ENCODE measurements at regions of chr13 and their contacts with region 1.

Region 1: DNA sequence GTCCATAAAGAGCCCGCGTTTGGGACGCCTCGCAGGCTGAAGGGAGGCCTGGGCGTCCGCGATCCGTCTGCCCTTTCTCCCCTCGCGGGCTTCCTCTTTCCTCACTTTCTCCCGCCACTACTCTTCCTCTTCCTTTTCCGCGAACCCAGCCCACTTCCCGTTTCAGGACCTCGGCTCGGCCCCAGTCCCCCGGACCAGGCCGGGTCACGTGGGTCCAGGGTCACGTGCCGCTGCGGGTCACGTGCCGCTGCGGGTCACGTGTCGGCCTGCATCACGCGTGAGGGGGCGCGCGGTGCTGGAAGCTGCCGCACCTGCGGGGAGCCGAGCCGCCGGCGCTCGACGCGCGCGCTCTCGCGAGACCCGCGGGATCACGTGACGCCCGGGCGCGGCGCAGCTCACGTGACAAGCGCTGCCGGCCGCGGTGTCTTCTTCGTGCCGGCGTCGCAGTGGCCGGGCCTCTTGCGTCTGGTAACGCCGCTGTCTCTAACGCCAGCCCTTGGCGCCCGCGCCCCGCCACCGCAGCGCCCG is at the start of gene LAMP1:
- DNase-seq: peak; percentile 97 to 100 (median 99)
- ATAC-seq: peak; percentile 83
- H3K4me3 ChIP-seq: peak within 1 kb of the TSS; percentile 72 to 93
- H3K4me3 Mint-ChIP-seq: peak within 1 kb of the TSS; percentile 96
- H3K27ac ChIP-seq: peak within 1 kb of the TSS; percentile 83 to 88
- H3K27ac Mint-ChIP-seq: peak within 1 kb of the TSS; percentile 100
- H3K4me1 ChIP-seq: peaks cover 31% of the 10 kb centered on the region
- H3K4me1 Mint-ChIP-seq: peaks cover 39% of the 10 kb centered on the region
- H3K27me3 ChIP-seq: peaks cover 2 to 4% of the 10 kb centered on the region in 2 experiments
- H3K27me3 Mint-ChIP-seq: peaks cover 12% of the 10 kb centered on the region
- CTCF ChIP-seq: no peak
- total RNA-seq, gene LAMP1: 84.8 to 87.5 TPM

Region 2: DNA sequence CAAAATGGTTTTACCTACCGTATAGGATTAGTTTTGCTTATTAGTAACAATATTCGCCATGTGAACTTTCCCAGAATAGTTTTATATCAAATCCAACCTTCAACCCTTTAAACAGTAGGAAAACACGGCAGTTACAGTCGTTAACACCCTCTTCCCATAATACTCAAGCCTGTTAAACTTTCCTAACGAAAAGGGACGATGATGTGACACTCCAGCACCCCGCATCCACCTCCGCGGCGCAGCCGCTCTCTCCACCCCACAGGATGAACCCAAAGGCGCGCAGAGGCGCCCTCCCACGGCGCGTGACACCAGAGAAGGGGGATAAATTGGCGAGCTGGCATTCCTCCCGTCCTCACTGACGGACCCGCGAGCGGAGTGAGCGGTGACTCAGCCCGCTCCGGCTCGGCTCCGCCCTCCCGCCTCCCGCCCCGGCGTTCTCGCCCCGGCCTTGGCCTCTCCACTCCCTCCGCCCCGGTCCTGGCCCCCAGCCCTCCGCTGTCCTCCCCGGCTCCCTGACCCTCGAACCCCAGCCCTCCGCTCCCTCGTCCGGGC is 709.6 kb before region 1 on chr13:
- CTCF ChIA-PET with region 1: no interaction called
- POLR2A ChIA-PET with region 1: no interaction called
- intact Hi-C with region 1: loop called in 1 of 2 experiments (anchors 10 kb)
- DNase-seq: peak; percentile 9 to 81 (median 68)
- ATAC-seq: peak; percentile 70
- H3K4me3 ChIP-seq: peak overlapping the region; percentile 76 to 83
- H3K4me3 Mint-ChIP-seq: peak overlapping the region; percentile 96
- H3K27ac ChIP-seq: peak overlapping the region; percentile 57 to 58
- H3K27ac Mint-ChIP-seq: peak overlapping the region; percentile 89
- H3K4me1 ChIP-seq: peaks cover 18% of the 10 kb centered on the region
- H3K4me1 Mint-ChIP-seq: peaks cover 44% of the 10 kb centered on the region
- H3K27me3 ChIP-seq: no peaks in the 10 kb centered on the region
- H3K27me3 Mint-ChIP-seq: no peaks in the 10 kb centered on the region
- CTCF ChIP-seq: no peak

Region 3: DNA sequence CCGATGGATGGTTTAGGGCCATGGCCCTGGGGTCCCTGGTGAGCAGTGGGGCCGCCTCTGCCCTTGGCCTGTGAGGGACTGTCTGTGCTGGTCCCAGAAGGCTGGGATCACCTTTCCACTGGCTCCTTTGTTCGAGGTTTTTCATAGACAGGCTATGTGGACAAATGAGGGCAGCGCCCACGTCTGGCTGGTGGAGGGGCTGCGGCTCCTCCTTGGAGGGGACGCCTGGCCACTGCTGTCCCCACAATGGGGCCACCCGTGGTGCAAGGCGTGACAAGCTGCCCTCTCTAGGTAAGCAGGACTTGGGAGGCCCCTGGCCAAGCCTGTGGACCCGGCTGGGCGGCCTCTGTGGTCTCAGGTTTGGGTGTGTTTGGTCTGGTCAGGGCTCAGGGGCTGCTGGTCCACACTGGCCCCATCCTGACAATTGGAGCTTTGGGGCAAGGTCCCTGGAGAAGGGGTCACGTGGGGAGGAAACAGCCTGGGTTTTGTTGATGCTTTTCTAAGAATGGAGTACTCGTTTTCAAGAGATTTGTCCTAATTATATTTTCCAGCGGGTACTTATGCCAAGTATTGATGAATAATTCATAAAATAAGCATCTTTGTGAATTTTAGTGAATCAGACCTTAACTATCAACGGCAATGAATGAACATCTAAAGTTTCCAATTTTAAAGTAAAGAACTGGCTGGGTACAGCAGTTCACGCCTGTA is 294.5 kb before region 1 on chr13:
- CTCF ChIA-PET with region 1: no interaction called
- POLR2A ChIA-PET with region 1: no interaction called
- intact Hi-C with region 1: no loop called
- DNase-seq: no peak
- ATAC-seq: no peak
- H3K4me3 ChIP-seq: no peak overlapping the region
- H3K4me3 Mint-ChIP-seq: no peak overlapping the region
- H3K27ac ChIP-seq: no peak overlapping the region
- H3K27ac Mint-ChIP-seq: no peak overlapping the region
- H3K4me1 ChIP-seq: peaks cover 13% of the 10 kb centered on the region
- H3K4me1 Mint-ChIP-seq: peaks cover 30% of the 10 kb centered on the region
- H3K27me3 ChIP-seq: peaks cover 0 to 4% of the 10 kb centered on the region in 2 experiments
- H3K27me3 Mint-ChIP-seq: no peaks in the 10 kb centered on the region
- CTCF ChIP-seq: no peak

Region 4: DNA sequence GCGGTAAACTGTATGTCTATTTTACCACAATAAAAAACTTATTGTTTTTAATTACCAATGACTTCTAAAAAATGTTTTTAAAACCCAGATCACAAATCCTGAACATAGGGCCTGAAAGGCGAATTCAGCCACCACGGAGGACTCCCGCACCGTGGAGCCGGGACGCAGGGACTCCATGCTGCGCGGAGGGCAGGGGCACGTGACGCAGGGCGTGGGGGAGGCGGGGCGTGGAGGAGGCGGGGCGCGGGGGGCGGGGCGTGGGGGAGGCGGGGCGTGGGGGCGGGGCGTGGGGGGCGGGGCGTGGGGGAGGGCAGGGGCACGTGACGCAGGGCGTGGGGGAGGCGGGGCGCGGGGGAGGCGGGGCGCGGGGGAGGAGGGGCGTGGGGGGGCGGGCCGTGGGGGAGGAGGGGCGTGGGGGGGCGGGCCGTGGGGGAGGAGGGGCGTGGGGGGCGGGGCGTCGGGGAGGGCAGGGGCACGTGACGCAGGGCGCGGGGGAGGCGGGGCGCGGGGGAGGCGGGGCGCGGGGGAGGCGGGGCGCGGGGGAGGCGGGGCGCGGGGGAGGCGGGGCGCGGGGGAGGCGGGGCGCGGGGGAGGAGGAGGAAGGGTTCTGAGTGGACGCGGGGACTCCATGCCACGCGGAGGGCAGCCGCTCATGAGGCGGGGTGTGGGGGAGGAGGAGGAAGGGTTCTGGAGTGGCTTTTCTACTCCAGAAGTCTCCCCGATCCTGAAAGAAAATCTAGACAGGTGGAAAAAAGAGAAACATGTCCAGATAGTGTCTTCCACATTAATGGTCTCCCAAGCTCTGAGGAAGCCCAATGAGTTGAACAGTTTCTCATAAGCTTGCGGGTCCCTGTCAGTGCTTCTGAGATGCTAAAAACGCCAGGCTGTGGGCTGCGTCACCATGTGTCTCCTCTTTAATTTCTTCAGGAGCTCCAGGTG is 142.8 kb before region 1 on chr13:
- CTCF ChIA-PET with region 1: no interaction called
- POLR2A ChIA-PET with region 1: interaction called, 3 read pairs
- intact Hi-C with region 1: loop called (anchors 1 to 2 kb)
- DNase-seq: peak; percentile 51 to 88 (median 75)
- ATAC-seq: peak; percentile 84
- H3K4me3 ChIP-seq: peak overlapping the region; percentile 52 to 56
- H3K4me3 Mint-ChIP-seq: peak overlapping the region; percentile 83
- H3K27ac ChIP-seq: peak overlapping the region; percentile 19 to 72
- H3K27ac Mint-ChIP-seq: peak overlapping the region; percentile 78
- H3K4me1 ChIP-seq: peaks cover 21% of the 10 kb centered on the region
- H3K4me1 Mint-ChIP-seq: peaks cover 17% of the 10 kb centered on the region
- H3K27me3 ChIP-seq: peaks cover 0 to 6% of the 10 kb centered on the region in 2 experiments
- H3K27me3 Mint-ChIP-seq: peaks cover 4% of the 10 kb centered on the region
- CTCF ChIP-seq: no peak

Region 5: GRCh38 chr13:113320226-113320875 is 23.4 kb after region 1 on chr13:
- CTCF ChIA-PET with region 1: no interaction called
- POLR2A ChIA-PET with region 1: no interaction called
- intact Hi-C with region 1: loop called in 1 of 2 experiments (anchors 2 kb)
- DNase-seq: no peak
- ATAC-seq: no peak
- H3K4me3 ChIP-seq: no peak overlapping the region
- H3K4me3 Mint-ChIP-seq: no peak overlapping the region
- H3K27ac ChIP-seq: no peak overlapping the region
- H3K27ac Mint-ChIP-seq: no peak overlapping the region
- H3K4me1 ChIP-seq: no peaks in the 10 kb centered on the region
- H3K4me1 Mint-ChIP-seq: no peaks in the 10 kb centered on the region
- H3K27me3 ChIP-seq: no peaks in the 10 kb centered on the region
- H3K27me3 Mint-ChIP-seq: no peaks in the 10 kb centered on the region
- CTCF ChIP-seq: no peak

Region 6: DNA sequence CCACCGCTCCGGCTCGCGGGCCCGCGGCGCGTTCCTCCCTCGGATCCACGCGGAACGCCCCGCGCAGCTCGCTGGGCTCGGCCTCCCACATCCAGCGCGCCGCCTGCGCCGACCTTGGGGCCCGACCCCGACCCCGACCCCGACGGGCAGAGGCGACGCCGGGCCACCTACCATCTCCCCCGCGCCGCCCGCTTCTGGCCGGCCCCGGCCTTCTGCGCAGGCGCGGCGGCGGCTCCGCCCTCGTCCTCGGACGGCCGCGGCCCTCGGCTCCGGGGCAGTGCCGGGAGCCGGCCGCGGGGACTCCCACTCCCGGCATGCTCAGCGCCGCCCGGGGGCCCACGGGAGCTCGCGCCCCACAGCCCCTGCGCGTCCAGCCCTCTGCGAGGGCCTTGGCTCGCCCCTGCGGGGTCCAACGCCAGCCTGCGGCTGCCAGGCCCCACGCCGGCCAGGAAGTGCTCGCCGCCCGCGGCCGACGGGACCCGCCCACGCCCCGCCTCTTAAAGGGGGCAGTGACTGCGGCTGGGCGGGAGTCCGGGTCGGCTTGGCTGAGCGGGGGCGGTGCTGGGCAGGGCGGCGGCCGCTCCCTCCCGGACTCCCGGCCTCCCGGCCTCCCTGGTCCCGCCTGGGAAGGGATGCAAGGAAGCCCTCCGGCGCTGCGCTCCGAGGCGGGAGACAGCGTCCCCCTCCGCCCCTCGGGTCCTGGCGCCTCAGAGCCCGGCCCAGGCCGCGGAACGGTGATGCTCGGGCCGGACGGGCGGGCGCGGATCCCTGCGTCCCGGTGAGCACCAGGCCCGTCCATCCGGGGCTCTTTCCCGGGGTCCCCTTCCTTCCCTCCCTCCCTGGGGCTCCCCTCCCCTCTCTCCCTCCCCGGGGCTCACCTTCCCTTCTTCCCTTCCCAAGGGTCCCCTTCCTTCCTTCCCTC is 193.9 kb after region 1 on chr13 and contains the start of gene DCUN1D2:
- CTCF ChIA-PET with region 1: no interaction called
- POLR2A ChIA-PET with region 1: no interaction called
- intact Hi-C with region 1: loop called (anchors 5 kb)
- DNase-seq: peak; percentile 46 to 84 (median 70)
- ATAC-seq: peak; percentile 69
- H3K4me3 ChIP-seq: peak within 1 kb of the TSS; percentile 62 to 66
- H3K4me3 Mint-ChIP-seq: peak within 1 kb of the TSS; percentile 91
- H3K27ac ChIP-seq: peak within 1 kb of the TSS in 1 of 2 experiments; percentile 42
- H3K27ac Mint-ChIP-seq: peak within 1 kb of the TSS; percentile 87
- H3K4me1 ChIP-seq: peaks cover 25% of the 10 kb centered on the region
- H3K4me1 Mint-ChIP-seq: peaks cover 64% of the 10 kb centered on the region
- H3K27me3 ChIP-seq: no peaks in the 10 kb centered on the region
- H3K27me3 Mint-ChIP-seq: no peaks in the 10 kb centered on the region
- CTCF ChIP-seq: no peak
- total RNA-seq, gene DCUN1D2: 10.4 to 13.9 TPM